Heart left ventricle (tissue), 16 donors: ENCODE measurements at regions of chr4 and their contacts with region 1.

Region 1: GRCh38 chr4:159150821-159151390 is 48.0 kb downstream of the RAPGEF2 start:
- DNase-seq: no peak
- ATAC-seq: peak in 1 of 4 donors; percentile 28
- H3K4me3 ChIP-seq: no peak overlapping the region
- H3K27ac ChIP-seq: no peak overlapping the region
- H3K4me1 ChIP-seq: peaks cover 0 to 86% (median 49%) of the 10 kb centered on the region in 12 donors
- H3K27me3 ChIP-seq: no peaks in the 10 kb centered on the region
- CTCF ChIP-seq: no peak
- POLR2A ChIP-seq: no peak

Region 2: GRCh38 chr4:158768555-158769174 is 382.2 kb before region 1 on chr4 and contains the start of gene FNIP2:
- intact Hi-C with region 1: no loop called
- DNase-seq: peak; percentile 86 to 92 (median 90)
- ATAC-seq: peak; percentile 89 to 97 (median 94)
- H3K4me3 ChIP-seq: peak within 1 kb of the TSS; percentile 70 to 97 (median 92)
- H3K27ac ChIP-seq: peak within 1 kb of the TSS; percentile 83 to 95 (median 91)
- H3K4me1 ChIP-seq: peaks cover 7 to 58% (median 43%) of the 10 kb centered on the region in 12 donors
- H3K27me3 ChIP-seq: no peaks in the 10 kb centered on the region
- CTCF ChIP-seq: peak in 1 of 12 donors; percentile 6
- POLR2A ChIP-seq: peak in 1 of 2 donors; percentile 69
- total RNA-seq, gene FNIP2: 32.4 to 87.4 (median 44.7) TPM

Region 3: DNA sequence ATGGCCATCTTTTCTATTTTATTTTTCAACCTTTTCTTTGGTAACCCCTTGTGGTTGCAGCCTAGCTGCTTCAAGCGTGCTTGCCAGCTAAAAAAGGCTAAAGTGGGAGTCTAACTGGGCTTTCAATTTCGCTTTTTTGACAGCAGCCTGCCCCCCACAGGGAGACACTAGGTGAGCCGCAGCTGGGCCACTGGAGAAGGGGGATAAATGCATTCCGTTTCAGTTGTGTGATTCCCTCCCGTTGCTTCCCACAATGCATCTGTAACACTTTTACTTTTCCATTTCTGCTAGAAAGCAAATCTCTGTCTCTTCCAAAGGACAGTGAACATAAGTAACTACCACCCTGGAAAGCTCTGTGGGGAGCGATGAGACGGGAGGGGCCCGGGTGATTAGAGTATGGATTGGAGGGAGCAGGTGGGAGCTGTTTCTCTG is 134.3 kb before region 1 on chr4:
- intact Hi-C with region 1: no loop called
- DNase-seq: no peak
- ATAC-seq: no peak
- H3K4me3 ChIP-seq: peak overlapping the region in 1 of 12 donors; percentile 4
- H3K27ac ChIP-seq: no peak overlapping the region
- H3K4me1 ChIP-seq: peaks cover 0 to 11% (median 0%) of the 10 kb centered on the region in 12 donors
- H3K27me3 ChIP-seq: no peaks in the 10 kb centered on the region
- CTCF ChIP-seq: peak in 1 of 12 donors; percentile 9
- POLR2A ChIP-seq: no peak

Region 4: DNA sequence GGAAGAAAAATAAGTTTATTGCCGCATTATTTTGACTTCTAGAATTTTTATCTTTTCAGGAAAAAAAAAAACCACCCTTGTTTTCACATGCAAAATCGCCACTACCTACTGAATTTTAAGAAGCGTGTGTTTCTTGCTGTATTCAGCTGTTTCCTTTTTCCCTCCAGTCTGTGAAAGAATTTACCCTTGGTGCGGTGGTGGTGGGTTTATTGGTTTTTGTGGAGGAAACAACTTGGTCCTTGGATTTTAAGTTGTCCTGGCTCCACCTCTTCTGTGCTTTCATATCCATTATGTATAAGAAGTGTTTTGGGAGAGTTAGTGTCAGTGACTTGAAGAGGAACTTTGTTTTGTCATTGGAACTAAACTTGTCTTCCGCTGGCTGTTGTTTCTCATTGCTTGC is 39.9 kb before region 1 on chr4:
- intact Hi-C with region 1: loop called in 4 of 10 experiments (anchors 5 kb)
- DNase-seq: no peak
- ATAC-seq: no peak
- H3K4me3 ChIP-seq: no peak overlapping the region
- H3K27ac ChIP-seq: no peak overlapping the region
- H3K4me1 ChIP-seq: peaks cover 0 to 62% (median 32%) of the 10 kb centered on the region in 12 donors
- H3K27me3 ChIP-seq: no peaks in the 10 kb centered on the region
- CTCF ChIP-seq: no peak
- POLR2A ChIP-seq: no peak

Region 5: DNA sequence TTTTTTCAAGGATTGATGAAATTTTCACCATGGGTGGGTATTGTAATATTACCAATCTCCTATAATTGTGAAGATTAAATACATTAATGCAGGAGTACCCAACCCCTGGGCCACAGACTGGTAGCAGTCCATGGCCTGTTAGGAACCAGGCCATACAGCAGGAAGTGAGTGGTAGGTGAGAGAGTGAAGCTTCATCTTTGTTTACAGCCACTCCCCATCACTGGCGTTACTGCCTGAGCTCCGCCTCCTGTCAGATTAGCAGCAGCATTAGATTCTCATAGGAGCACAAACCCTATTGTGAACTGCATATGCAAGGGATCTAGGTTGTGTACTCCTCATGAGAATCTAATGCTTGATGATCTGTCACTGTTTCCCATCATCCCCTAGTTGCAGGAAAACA is 32.9 kb before region 1 on chr4:
- intact Hi-C with region 1: loop called in 3 of 10 experiments (anchors 5 kb)
- DNase-seq: no peak
- ATAC-seq: no peak
- H3K4me3 ChIP-seq: no peak overlapping the region
- H3K27ac ChIP-seq: no peak overlapping the region
- H3K4me1 ChIP-seq: peaks cover 0 to 29% (median 14%) of the 10 kb centered on the region in 12 donors
- H3K27me3 ChIP-seq: no peaks in the 10 kb centered on the region
- CTCF ChIP-seq: no peak
- POLR2A ChIP-seq: no peak

Region 6: DNA sequence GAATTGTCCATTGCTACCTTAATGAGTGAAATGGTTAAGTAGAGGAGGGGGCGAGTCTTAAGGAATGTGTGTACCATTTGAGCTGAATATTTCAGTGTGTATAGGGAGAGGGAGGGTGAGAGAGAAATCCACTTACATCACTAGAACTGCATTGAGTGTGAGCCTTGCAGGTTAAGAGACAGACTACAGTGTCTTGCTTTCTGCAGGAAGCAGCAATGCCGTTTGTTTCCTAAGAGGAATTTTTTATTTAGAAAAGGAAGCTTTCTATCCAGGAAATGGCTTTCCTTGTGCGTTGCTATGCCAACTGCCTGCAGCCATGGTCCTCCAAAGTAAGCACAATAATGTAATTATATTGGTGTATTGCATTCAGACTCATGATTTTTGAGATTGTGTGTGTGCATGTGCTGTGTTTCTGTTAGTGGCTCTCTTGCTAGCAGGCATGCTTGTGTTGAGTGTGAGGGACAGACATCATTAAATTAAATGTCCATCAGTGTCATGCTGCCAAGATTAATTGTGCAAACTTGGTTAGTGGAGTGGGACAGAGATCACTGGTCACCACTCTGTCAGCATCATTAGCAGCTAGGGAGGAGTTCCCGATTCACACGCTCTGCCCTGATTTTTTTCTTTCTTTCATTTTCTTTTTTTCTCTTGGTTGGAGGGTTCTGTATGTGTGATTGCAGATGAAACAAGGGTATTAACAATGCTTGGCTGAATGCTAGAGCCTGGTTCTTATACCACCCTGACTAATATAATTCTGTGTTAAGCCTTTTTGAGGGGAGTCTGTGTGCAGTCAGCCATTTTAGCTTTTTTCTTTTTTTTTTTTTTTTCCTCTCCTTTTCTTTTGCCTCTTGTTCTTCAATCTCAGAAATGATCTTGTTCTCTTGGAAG is 116.3 kb after region 1 on chr4:
- intact Hi-C with region 1: no loop called
- DNase-seq: no peak
- ATAC-seq: peak; percentile 29 to 70 (median 48)
- H3K4me3 ChIP-seq: peak overlapping the region in 11 of 12 donors; percentile 4 to 46 (median 34)
- H3K27ac ChIP-seq: peak overlapping the region in 11 of 12 donors; percentile 25 to 65 (median 55)
- H3K4me1 ChIP-seq: peaks cover 4 to 95% (median 60%) of the 10 kb centered on the region in 12 donors
- H3K27me3 ChIP-seq: no peaks in the 10 kb centered on the region
- CTCF ChIP-seq: no peak
- POLR2A ChIP-seq: no peak